ENCODE measurements at regions of chr14 and their contacts with region 1.

Region 1: GRCh38 chr14:35292051-35292769 is at the start of gene PSMA6:
- DNase-seq: peak; percentile 99
- ATAC-seq: peak; percentile 98
- H3K4me3 ChIP-seq: peak within 1 kb of the TSS; percentile 71 to 96 (median 93)
- H3K4me3 Mint-ChIP-seq: peak within 1 kb of the TSS; percentile 99
- H3K27ac ChIP-seq: peak within 1 kb of the TSS; percentile 75 to 93
- H3K27ac Mint-ChIP-seq: peak within 1 kb of the TSS; percentile 96
- H3K4me1 ChIP-seq: peaks cover 34 to 44% of the 10 kb centered on the region in 2 donors
- H3K4me1 Mint-ChIP-seq: peaks cover 44% of the 10 kb centered on the region
- H3K27me3 ChIP-seq: no peaks in the 10 kb centered on the region
- H3K27me3 Mint-ChIP-seq: no peaks in the 10 kb centered on the region
- CTCF ChIP-seq: no peak
- total RNA-seq, gene PSMA6: 70.6 and 86.8 TPM in 2 replicates

Region 2: GRCh38 chr14:34539407-34540180 is 752.6 kb before region 1 on chr14 and contains the start of gene EAPP:
- CTCF ChIA-PET with region 1: no interaction called
- POLR2A ChIA-PET with region 1: no interaction called
- intact Hi-C with region 1: loop called (anchors 5 kb)
- DNase-seq: peak; percentile 96
- ATAC-seq: peak; percentile 99
- H3K4me3 ChIP-seq: peak within 1 kb of the TSS; percentile 44 to 97 (median 89)
- H3K4me3 Mint-ChIP-seq: peak within 1 kb of the TSS; percentile 99
- H3K27ac ChIP-seq: peak within 1 kb of the TSS; percentile 91 to 97
- H3K27ac Mint-ChIP-seq: peak within 1 kb of the TSS; percentile 99
- H3K4me1 ChIP-seq: peaks cover 18 to 24% of the 10 kb centered on the region in 2 donors
- H3K4me1 Mint-ChIP-seq: peaks cover 21% of the 10 kb centered on the region
- H3K27me3 ChIP-seq: no peaks in the 10 kb centered on the region
- H3K27me3 Mint-ChIP-seq: no peaks in the 10 kb centered on the region
- CTCF ChIP-seq: no peak
- total RNA-seq, gene EAPP: 54.8 and 58.0 TPM in 2 replicates

Region 3: GRCh38 chr14:35229495-35230089 is 62.6 kb before region 1 on chr14:
- CTCF ChIA-PET with region 1: interaction called, 10 read pairs
- POLR2A ChIA-PET with region 1: no interaction called
- intact Hi-C with region 1: loop called (anchors 5 kb)
- DNase-seq: peak; percentile 57
- ATAC-seq: peak; percentile 36
- H3K4me3 ChIP-seq: no peak overlapping the region
- H3K4me3 Mint-ChIP-seq: no peak overlapping the region
- H3K27ac ChIP-seq: no peak overlapping the region
- H3K27ac Mint-ChIP-seq: no peak overlapping the region
- H3K4me1 ChIP-seq: no peaks in the 10 kb centered on the region
- H3K4me1 Mint-ChIP-seq: no peaks in the 10 kb centered on the region
- H3K27me3 ChIP-seq: no peaks in the 10 kb centered on the region
- H3K27me3 Mint-ChIP-seq: no peaks in the 10 kb centered on the region
- CTCF ChIP-seq: peak; percentile 67

Region 4: GRCh38 chr14:35304812-35305462 is 12.7 kb after region 1 on chr14:
- CTCF ChIA-PET with region 1: interaction called, 3 read pairs
- POLR2A ChIA-PET with region 1: interaction called, 10 read pairs
- intact Hi-C with region 1: no loop called
- DNase-seq: no peak
- ATAC-seq: no peak
- H3K4me3 ChIP-seq: no peak overlapping the region
- H3K4me3 Mint-ChIP-seq: no peak overlapping the region
- H3K27ac ChIP-seq: no peak overlapping the region
- H3K27ac Mint-ChIP-seq: no peak overlapping the region
- H3K4me1 ChIP-seq: peaks cover 14 to 28% of the 10 kb centered on the region in 2 donors
- H3K4me1 Mint-ChIP-seq: peaks cover 32% of the 10 kb centered on the region
- H3K27me3 ChIP-seq: no peaks in the 10 kb centered on the region
- H3K27me3 Mint-ChIP-seq: no peaks in the 10 kb centered on the region
- CTCF ChIP-seq: no peak

Region 5: DNA sequence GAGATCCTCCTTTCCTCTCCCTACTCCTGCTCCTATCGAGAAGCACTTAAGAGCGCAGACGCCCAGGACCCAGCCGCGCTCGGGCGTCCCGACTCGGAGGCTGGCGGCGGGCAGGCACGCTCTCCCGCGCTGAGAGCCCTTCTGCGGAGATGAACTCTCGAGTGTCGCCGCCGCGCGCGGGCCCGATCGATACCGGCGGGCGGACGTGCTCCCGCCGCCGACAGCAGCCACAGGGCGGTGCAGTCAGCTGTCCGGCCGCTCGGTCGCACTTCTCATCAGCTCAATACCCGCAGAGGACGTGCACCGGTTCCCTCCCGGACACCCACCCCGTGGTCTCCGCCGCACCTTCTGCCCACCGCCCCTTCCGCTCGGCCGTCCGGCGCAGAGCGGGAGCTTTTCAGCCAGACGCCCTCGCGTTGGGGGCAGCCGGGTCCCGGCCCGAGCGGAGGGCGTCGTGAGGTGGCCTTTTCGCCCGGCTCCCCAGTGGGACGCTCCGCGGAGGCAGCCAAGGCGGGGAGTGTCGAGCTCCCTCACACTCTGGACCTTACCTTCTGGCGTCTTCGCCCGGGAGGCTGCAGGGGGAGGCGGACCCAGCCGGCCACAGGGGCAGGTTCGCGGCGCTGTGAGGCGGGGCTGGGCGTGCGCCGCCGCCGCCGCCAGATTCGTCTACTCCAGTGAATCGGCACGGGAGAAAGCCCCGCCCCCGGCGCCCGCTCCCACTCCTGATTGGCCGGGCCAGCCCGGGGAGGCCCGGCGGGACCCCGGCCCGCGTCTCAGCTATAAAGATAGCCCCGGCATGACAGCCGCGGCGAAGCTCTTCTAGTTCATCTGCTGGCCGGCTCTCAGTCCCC is 241.4 kb after region 1 on chr14 and contains the start of gene INSM2:
- CTCF ChIA-PET with region 1: no interaction called
- POLR2A ChIA-PET with region 1: no interaction called
- intact Hi-C with region 1: loop called (anchors 10 kb)
- DNase-seq: peak; percentile 57
- ATAC-seq: peak; percentile 65
- H3K4me3 ChIP-seq: peak within 1 kb of the TSS in 4 of 5 experiments; percentile 43 to 67 (median 62)
- H3K4me3 Mint-ChIP-seq: peak within 1 kb of the TSS; percentile 87
- H3K27ac ChIP-seq: no peak within 1 kb of the TSS
- H3K27ac Mint-ChIP-seq: no peak within 1 kb of the TSS
- H3K4me1 ChIP-seq: peaks cover 21 to 23% of the 10 kb centered on the region in 2 donors
- H3K4me1 Mint-ChIP-seq: peaks cover 18% of the 10 kb centered on the region
- H3K27me3 ChIP-seq: peaks cover 3 to 35% (median 34%) of the 10 kb centered on the region in 4 experiments
- H3K27me3 Mint-ChIP-seq: peaks cover 57% of the 10 kb centered on the region
- CTCF ChIP-seq: no peak
- total RNA-seq, gene INSM2: not detected in 2 replicates